ENCODE measurements at regions of chr14 and their contacts with region 1.

Region 1: GRCh38 chr14:77023001-77023996 is 5.2 kb downstream of the IRF2BPL start:
- DNase-seq: no peak
- H3K27ac ChIP-seq: peak overlapping the region; percentile 97
- CTCF ChIP-seq: no peak; the same call in none of the 2 replicates

Region 2: DNA sequence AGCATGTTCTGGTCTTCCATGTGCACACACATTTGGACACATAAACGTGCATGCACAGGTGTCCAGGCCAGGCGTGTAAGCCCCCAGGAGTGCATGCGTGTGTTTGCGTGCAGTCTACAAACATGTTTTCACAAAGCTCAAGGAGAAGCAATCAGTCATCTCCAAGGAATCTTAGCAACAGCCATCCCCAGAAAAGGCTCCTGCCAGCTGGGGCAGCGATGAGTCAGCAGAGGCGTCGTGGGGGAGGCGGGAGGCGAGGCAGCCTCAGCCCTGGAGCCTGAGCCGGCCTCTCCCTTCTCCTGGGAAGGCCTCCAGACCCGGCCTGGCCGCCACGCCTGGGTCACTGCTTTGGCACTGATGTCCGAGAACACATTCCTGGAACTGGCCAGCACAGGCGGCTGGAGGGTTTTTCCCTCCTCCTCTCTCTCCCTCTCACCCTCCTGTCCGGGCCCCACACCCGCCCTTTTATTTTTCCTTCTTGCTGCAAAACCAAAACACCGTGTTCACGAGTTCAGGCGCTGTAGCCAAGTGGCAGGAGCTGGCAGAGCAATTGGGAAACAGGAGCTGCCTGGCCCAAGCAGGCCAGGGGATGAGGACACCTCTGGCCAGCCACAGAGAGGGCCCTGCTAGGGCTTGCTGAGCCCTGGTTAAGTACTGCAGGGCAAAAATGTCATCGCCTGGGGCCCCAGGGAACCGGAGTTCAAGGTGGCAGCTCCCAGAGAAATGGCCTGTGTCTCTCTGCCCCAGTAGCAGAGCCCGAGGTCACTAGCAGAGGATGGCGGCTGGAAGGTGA is 104.4 kb before region 1 on chr14:
- CTCF ChIA-PET with region 1: interaction called, 14 read pairs
- POLR2A ChIA-PET with region 1: interaction called, 3 read pairs
- DNase-seq: peak; percentile 97
- H3K27ac ChIP-seq: peak overlapping the region; percentile 100
- CTCF ChIP-seq: no peak

Region 3: GRCh38 chr14:76962303-76962660 is 61.0 kb before region 1 on chr14:
- CTCF ChIA-PET with region 1: interaction called, 13 read pairs
- POLR2A ChIA-PET with region 1: interaction called, 6 read pairs
- DNase-seq: no peak
- H3K27ac ChIP-seq: peak overlapping the region; percentile 100
- CTCF ChIP-seq: no peak

Region 4: GRCh38 chr14:77067632-77068514 is 44.6 kb after region 1 on chr14:
- CTCF ChIA-PET with region 1: interaction called, 20 read pairs
- POLR2A ChIA-PET with region 1: interaction called, 3 read pairs
- DNase-seq: peak; percentile 80
- H3K27ac ChIP-seq: peak overlapping the region; percentile 57
- CTCF ChIP-seq: peak; percentile 91

Measured in RWPE1 (cell line).